ENCODE measurements at regions of chr15 and their contacts with region 1.

Region 1: DNA sequence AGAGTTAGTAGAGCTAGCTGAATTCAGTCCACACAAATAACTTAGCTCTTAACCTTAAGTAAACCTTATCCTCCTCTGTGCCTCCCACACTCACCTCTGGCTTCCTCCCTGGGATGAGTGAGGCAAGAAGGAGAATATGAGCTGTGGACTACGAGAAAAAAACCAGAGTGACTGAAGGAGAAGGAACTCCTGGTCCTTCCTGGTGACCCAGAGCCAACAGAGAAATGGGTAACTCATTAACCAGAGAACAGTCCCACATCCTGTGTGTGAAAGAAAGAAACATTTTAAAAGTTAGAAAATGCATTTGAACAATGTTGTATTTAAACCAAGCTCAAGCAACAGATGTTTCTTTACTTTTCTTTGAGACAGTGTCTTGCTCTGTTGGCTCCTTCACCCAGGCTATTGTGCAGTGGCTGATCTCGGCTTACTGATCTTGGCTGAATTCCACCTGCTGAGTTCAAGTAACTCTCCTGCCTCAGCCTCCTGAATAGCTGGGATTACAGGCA is 27.5 kb upstream of the FAM81A start:
- DNase-seq: no peak
- ATAC-seq: no peak
- H3K4me3 ChIP-seq: no peak overlapping the region
- H3K27ac ChIP-seq: no peak overlapping the region
- H3K4me1 ChIP-seq: peaks cover 0 to 14% of the 10 kb centered on the region in 2 experiments; a peak in 2 of 4 replicates
- H3K27me3 ChIP-seq: no peaks in the 10 kb centered on the region
- CTCF ChIP-seq: no peak
- POLR2A ChIP-seq: no peak
- RAD21 ChIP-seq: no peak

Region 2: GRCh38 chr15:59174835-59175831 is 235.3 kb before region 1 on chr15:
- CTCF ChIA-PET with region 1: no interaction called
- POLR2A ChIA-PET with region 1: no interaction called
- RAD21 ChIA-PET with region 1: interaction called in 1 of 2 experiments, 3 read pairs
- intact Hi-C with region 1: loop called (anchors 5 kb)
- DNase-seq: peak; percentile 74
- ATAC-seq: peak; percentile 96
- H3K4me3 ChIP-seq: no peak overlapping the region
- H3K27ac ChIP-seq: no peak overlapping the region; the same call in 1 of the 2 replicates
- H3K4me1 ChIP-seq: peaks cover 9 to 24% of the 10 kb centered on the region in 2 experiments
- H3K27me3 ChIP-seq: no peaks in the 10 kb centered on the region
- CTCF ChIP-seq: peak; percentile 70 to 74 (median 72)
- POLR2A ChIP-seq: no peak
- RAD21 ChIP-seq: peak; percentile 84

Region 3: GRCh38 chr15:59247364-59247763 is 163.1 kb before region 1 on chr15:
- CTCF ChIA-PET with region 1: no interaction called
- POLR2A ChIA-PET with region 1: no interaction called
- RAD21 ChIA-PET with region 1: no interaction called
- intact Hi-C with region 1: loop called (anchors 5 kb)
- DNase-seq: no peak
- ATAC-seq: peak; percentile 94
- H3K4me3 ChIP-seq: no peak overlapping the region
- H3K27ac ChIP-seq: no peak overlapping the region
- H3K4me1 ChIP-seq: peaks cover 0 to 37% of the 10 kb centered on the region in 2 experiments; a peak in 2 of 4 replicates
- H3K27me3 ChIP-seq: no peaks in the 10 kb centered on the region
- CTCF ChIP-seq: peak; percentile 41 to 77 (median 70); a peak in 5 of 6 replicates
- POLR2A ChIP-seq: no peak
- RAD21 ChIP-seq: peak; percentile 71

Region 4: GRCh38 chr15:59917504-59918157 is 507.2 kb after region 1 on chr15:
- CTCF ChIA-PET with region 1: no interaction called
- POLR2A ChIA-PET with region 1: no interaction called
- RAD21 ChIA-PET with region 1: no interaction called
- intact Hi-C with region 1: no loop called
- DNase-seq: peak; percentile 22
- ATAC-seq: peak; percentile 100
- H3K4me3 ChIP-seq: no peak overlapping the region
- H3K27ac ChIP-seq: no peak overlapping the region
- H3K4me1 ChIP-seq: no peaks in the 10 kb centered on the region
- H3K27me3 ChIP-seq: peaks cover 33% of the 10 kb centered on the region
- CTCF ChIP-seq: peak; percentile 29 to 71 (median 69); a peak in 5 of 6 replicates
- POLR2A ChIP-seq: no peak
- RAD21 ChIP-seq: peak; percentile 50